Activated CD4-positive, alpha-beta T cell treated with anti-CD3 and anti-CD28 coated beads, Interleukin-2, amount 10 ng/mL, durations not matched to agents 24 days and 14 days (primary cell): ENCODE measurements at regions of chr15 and their contacts with region 1.

Region 1: DNA sequence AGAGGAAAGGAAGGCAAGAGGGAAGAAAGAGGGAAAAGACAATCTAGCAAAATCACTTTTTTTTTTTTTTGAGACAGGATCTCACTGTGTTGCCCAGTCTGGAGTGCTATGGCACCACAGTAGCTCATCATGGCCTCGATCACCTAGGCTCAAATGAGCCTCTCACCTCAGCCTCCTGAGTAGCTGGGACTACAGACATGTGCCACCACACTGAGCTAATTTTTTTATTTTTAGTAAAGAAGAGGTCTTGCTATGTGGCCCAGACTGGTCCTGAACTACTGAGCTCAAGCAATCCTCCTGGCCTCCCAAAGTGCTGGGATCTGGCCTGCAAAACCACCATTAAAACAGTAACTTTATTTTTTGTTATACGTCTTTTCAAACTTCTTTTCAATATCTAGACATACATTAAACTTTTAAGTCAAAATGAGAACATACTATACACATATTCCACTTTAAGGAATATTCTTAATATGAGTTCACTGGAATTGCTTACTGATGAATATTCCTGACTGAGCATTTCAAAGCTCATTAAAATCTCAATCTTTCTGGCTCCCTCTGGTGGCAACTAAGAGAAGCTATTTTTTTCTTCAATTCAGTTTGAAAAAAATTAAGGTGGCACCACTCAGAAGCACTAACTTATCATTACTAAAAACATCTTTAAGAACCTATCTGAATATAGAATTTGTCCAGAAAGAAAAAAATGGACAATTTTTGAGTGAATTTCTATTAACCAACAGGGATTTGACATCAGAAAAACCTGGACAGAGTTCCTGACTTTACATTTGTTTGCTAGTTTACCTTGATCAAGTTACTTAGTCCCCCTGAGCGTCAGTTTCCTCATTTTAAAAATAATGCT is 40.9 kb downstream of the UACA start:
- DNase-seq: no peak
- H3K4me3 Mint-ChIP-seq: no peak overlapping the region
- H3K27ac Mint-ChIP-seq: no peak overlapping the region
- H3K4me1 Mint-ChIP-seq: no peaks in the 10 kb centered on the region
- H3K27me3 Mint-ChIP-seq: peaks cover 33% of the 10 kb centered on the region

Region 2: GRCh38 chr15:70271422-70272088 is 450.9 kb before region 1 on chr15:
- intact Hi-C with region 1: no loop called
- DNase-seq: no peak
- H3K4me3 Mint-ChIP-seq: no peak overlapping the region
- H3K27ac Mint-ChIP-seq: no peak overlapping the region
- H3K4me1 Mint-ChIP-seq: peaks cover 9% of the 10 kb centered on the region
- H3K27me3 Mint-ChIP-seq: peaks cover 31% of the 10 kb centered on the region

Region 3: DNA sequence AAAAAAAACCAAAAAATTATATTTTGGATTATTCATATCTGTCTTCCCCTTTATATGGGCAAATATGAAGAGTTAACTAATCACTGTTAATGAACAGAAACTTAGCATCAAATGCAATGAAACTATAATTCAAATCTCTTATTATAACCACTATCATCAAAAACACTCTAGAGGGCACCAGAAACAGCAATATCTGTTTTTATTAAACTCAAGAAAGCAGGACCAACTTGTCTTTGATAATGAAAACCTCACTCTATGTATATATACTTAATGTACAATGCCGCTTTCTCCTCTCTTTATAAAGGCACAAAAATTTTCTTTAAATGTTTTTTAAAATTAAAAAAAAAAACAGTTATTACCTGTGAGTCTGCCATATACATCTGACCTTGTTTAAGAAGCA is 51.8 kb before region 1 on chr15:
- intact Hi-C with region 1: loop called (anchors 10 kb)
- DNase-seq: no peak
- H3K4me3 Mint-ChIP-seq: no peak overlapping the region
- H3K27ac Mint-ChIP-seq: no peak overlapping the region
- H3K4me1 Mint-ChIP-seq: peaks cover 18% of the 10 kb centered on the region
- H3K27me3 Mint-ChIP-seq: peaks cover 23% of the 10 kb centered on the region

Region 4: DNA sequence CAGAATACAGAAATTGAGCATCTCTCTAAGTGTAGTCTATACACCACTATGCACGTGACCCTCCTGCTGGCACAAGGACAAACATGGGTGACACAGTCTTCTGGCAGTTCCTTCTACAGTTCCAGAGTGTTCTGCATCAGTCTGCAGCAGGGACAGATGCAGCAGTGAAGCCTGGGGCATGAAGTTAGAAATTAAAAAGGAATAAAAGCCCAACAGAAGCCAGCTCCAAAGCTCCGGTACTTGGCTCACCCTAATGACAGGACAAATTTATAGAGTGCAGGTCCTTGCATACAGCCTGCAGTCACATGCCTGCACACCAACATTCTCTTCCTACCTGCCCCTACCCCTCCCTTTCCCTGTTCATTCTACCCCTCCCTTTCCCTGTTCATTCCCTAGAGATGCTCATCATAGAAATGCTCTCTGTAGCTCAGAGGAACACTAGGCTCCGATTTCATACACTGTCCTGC is 25.8 kb after region 1 on chr15:
- intact Hi-C with region 1: no loop called
- DNase-seq: no peak
- H3K4me3 Mint-ChIP-seq: no peak overlapping the region
- H3K27ac Mint-ChIP-seq: no peak overlapping the region
- H3K4me1 Mint-ChIP-seq: no peaks in the 10 kb centered on the region
- H3K27me3 Mint-ChIP-seq: peaks cover 24% of the 10 kb centered on the region